Activated CD8-positive, alpha-beta T cell treated with anti-CD3 and anti-CD28 coated beads, Interleukin-2, amount 10 ng/mL, durations not matched to agents 7 days and 5 days (primary cell): ENCODE measurements at regions of chr12 and their contacts with region 1.

Region 1: GRCh38 chr12:80269803-80270552 is 170.6 kb downstream of the OTOGL start:
- DNase-seq: peak; percentile 22
- ATAC-seq: peak; percentile 68
- H3K4me3 Mint-ChIP-seq: no peak overlapping the region
- H3K27ac Mint-ChIP-seq: no peak overlapping the region
- H3K4me1 Mint-ChIP-seq: no peaks in the 10 kb centered on the region
- H3K27me3 Mint-ChIP-seq: peaks cover 4% of the 10 kb centered on the region

Region 2: GRCh38 chr12:80195074-80195726 is 74.8 kb before region 1 on chr12:
- CTCF ChIA-PET with region 1: interaction called, 15 read pairs
- POLR2A ChIA-PET with region 1: no interaction called
- DNase-seq: no peak
- ATAC-seq: no peak
- H3K4me3 Mint-ChIP-seq: no peak overlapping the region
- H3K27ac Mint-ChIP-seq: no peak overlapping the region
- H3K4me1 Mint-ChIP-seq: no peaks in the 10 kb centered on the region
- H3K27me3 Mint-ChIP-seq: peaks cover 10% of the 10 kb centered on the region

Region 3: GRCh38 chr12:80282761-80283160 is 12.8 kb after region 1 on chr12:
- CTCF ChIA-PET with region 1: no interaction called
- POLR2A ChIA-PET with region 1: no interaction called
- DNase-seq: no peak
- ATAC-seq: no peak
- H3K4me3 Mint-ChIP-seq: no peak overlapping the region
- H3K27ac Mint-ChIP-seq: no peak overlapping the region
- H3K4me1 Mint-ChIP-seq: no peaks in the 10 kb centered on the region
- H3K27me3 Mint-ChIP-seq: no peaks in the 10 kb centered on the region